SK-N-SH (cell line): ENCODE measurements at regions of chr5 and their contacts with region 1.

Region 1: DNA sequence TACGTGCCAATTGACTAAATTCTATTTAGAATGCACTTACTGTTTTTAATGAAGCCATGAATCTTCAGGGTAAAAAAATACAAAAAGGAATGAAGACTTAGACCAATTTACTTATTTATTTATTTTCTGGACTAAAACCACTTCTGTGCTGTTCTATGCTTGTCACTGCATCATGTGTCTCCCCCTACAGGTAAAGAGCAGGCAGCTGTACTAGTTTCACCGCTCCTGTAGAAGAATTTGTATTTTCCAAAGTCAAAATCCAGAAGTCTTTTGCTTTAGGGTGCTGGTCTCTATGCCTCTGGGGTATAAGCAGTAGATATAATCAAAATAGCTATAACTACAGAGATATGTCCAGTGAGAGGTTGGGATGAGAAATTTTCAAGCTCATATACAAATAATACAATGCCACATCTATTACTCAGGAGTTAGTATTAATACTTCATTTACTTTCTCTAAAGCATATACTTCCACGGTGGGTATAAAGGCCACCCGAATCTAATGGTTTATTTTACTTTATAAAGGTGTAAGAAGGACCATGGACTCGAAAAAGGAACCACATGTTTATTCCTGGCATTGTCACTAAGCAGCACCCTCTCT is 591.5 kb downstream of the RAB3C start:
- DNase-seq: peak; percentile 54
- H3K4me3 ChIP-seq: peak overlapping the region in 1 of 2 experiments; percentile 51; a peak in 1 of 4 replicates
- H3K27ac ChIP-seq: no peak overlapping the region
- H3K4me1 ChIP-seq: peaks cover 0 to 5% of the 10 kb centered on the region in 2 experiments; a peak in 2 of 4 replicates
- H3K27me3 ChIP-seq: no peaks in the 10 kb centered on the region
- CTCF ChIP-seq: peak; percentile 97
- EP300 ChIP-seq: no peak
- RAD21 ChIP-seq: peak; percentile 93

Region 2: DNA sequence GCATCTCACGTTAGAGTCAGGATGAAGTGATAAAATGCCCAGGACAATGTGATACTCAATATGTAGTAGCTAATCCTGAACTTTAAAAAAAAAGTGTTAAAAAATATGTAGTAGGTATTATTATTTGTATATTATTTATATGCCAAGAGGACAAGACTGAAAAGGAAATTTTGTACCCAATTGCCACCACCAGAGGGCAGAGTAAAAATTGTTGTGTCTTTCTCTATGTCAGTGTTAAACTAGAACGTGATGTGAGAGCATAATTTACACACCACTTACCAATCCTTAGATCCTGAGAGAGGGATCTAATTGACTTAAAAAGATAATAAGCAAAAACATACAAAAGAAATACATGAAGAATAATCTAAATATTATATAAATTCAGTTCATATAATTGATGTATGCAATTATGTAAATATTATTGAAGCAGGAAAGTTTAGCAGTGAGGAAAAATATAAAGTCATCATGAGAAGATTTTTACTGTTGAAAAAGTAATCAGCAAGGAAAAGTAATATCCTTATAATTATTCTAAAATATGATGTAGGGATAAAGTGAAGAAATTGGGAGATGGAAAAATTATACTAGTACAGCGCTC is 302.6 kb before region 1 on chr5:
- CTCF ChIA-PET with region 1: interaction called, 12 read pairs
- POLR2A ChIA-PET with region 1: no interaction called
- DNase-seq: peak; percentile 26
- H3K4me3 ChIP-seq: no peak overlapping the region; a peak in 1 of 4 replicates
- H3K27ac ChIP-seq: no peak overlapping the region
- H3K4me1 ChIP-seq: peaks cover 0 to 4% of the 10 kb centered on the region in 2 experiments; a peak in 1 of 4 replicates
- H3K27me3 ChIP-seq: no peaks in the 10 kb centered on the region
- CTCF ChIP-seq: peak; percentile 73
- EP300 ChIP-seq: no peak
- RAD21 ChIP-seq: peak; percentile 47

Region 3: GRCh38 chr5:59007460-59008063 is 166.8 kb before region 1 on chr5:
- CTCF ChIA-PET with region 1: interaction called, 16 read pairs
- POLR2A ChIA-PET with region 1: no interaction called
- DNase-seq: peak; percentile 15
- H3K4me3 ChIP-seq: peak overlapping the region in 1 of 2 experiments; percentile 17; a peak in 1 of 4 replicates
- H3K27ac ChIP-seq: no peak overlapping the region
- H3K4me1 ChIP-seq: peaks cover 0 to 10% of the 10 kb centered on the region in 2 experiments; a peak in 1 of 4 replicates
- H3K27me3 ChIP-seq: no peaks in the 10 kb centered on the region
- CTCF ChIP-seq: peak; percentile 68
- EP300 ChIP-seq: no peak
- RAD21 ChIP-seq: peak; percentile 79

Region 4: DNA sequence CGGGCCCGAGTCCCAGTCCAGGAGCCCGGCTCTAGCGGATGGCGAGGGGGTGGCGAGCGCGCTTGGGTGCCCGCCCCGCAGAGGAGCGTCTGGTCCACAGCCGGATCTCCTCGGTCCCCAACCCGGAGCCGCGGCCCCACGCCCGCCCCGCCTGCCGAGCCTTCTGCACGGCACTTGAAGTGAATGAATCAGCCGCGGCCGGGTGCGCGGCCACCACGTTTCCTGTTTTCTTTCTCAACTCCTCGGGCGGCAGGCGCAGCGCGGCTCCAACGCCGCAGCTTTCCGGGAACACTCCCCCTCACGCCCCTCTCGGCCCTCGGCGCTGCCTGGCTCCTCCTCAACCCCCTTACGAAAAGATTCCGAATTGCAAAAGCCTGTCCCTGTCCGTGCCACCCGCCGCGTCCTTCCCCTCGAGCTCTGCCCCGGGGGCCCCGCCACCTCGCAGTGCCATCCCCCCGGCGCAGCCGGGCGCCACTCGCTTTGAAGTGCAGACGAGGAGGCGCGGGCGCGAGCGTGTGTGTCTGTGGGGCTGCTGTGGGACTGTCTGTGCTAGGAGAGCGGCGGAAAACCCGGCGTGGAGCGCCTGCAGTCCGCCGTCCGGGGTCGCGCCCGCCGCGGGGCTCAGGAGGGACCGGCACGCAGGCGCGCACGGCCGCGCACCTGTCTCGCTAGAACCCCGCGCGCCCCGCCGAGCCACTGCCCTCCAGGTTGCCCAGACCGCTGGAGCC is 134.9 kb before region 1 on chr5:
- CTCF ChIA-PET with region 1: interaction called, 96 read pairs
- POLR2A ChIA-PET with region 1: no interaction called
- DNase-seq: peak; percentile 87
- H3K4me3 ChIP-seq: peak overlapping the region; percentile 74 to 76
- H3K27ac ChIP-seq: peak overlapping the region; percentile 41 to 50; a peak in 2 of 4 replicates
- H3K4me1 ChIP-seq: peaks cover 26 to 45% of the 10 kb centered on the region in 2 experiments
- H3K27me3 ChIP-seq: no peaks in the 10 kb centered on the region
- CTCF ChIP-seq: no peak
- EP300 ChIP-seq: 0 out of 4 replicates have a peak, but pooled peaks of 1 of the 2 experiments have one; percentile 38
- RAD21 ChIP-seq: no peak

Region 5: DNA sequence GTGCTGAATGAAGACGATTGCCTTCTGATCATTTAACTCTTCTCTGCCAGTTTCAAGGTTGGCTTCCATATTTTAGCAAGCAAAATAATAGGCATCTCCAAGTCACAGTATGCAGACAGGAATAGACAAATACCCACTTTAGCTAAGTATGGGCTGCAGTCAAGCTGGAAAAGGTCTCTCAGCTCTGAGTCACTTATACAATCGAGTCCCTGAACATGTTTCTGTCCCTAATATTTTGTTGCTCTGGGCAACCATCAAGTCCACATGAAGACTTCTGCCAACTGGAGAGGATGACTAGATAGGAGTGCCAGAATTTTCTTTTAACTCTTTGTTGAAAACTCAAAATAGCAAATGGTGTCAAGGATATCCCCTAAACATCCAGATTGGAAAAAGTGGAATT is 16.2 kb before region 1 on chr5:
- CTCF ChIA-PET with region 1: interaction called, 20 read pairs
- POLR2A ChIA-PET with region 1: no interaction called
- DNase-seq: no peak
- H3K4me3 ChIP-seq: no peak overlapping the region
- H3K27ac ChIP-seq: no peak overlapping the region
- H3K4me1 ChIP-seq: no peaks in the 10 kb centered on the region; a peak in 1 of 4 replicates
- H3K27me3 ChIP-seq: no peaks in the 10 kb centered on the region
- CTCF ChIP-seq: no peak
- EP300 ChIP-seq: no peak
- RAD21 ChIP-seq: no peak

Region 6: DNA sequence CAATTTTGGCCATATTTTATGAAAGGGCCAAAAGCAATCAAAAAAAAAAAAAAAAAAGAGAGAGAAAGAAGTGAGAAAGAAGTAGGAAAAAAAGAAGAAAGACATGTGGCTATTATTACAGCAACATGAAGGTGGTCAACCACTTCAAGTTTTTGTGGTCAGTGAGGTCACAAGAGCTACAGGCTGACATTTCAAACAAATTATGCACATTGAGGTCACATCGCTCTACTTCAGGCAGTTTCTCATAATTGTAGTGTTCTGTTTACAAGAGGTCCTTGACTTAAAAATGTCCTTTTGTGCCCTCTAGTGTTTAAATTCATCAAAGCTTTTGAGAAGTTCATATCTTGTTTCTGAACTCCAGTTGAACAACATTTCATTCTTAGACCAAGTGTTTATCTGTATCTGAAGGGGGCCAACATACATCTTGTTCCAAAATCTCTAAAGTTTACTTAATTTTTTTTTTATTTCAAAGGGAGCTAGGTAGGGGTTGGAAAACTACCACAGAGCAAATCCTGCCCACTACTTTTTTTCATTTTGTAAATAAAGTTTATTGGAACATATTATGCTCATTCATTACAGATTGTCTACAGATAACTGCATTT is 206.1 kb after region 1 on chr5:
- CTCF ChIA-PET with region 1: interaction called, 14 read pairs
- POLR2A ChIA-PET with region 1: no interaction called
- DNase-seq: peak; percentile 28
- H3K4me3 ChIP-seq: no peak overlapping the region
- H3K27ac ChIP-seq: no peak overlapping the region
- H3K4me1 ChIP-seq: no peaks in the 10 kb centered on the region; a peak in 1 of 4 replicates
- H3K27me3 ChIP-seq: no peaks in the 10 kb centered on the region
- CTCF ChIP-seq: peak; percentile 74
- EP300 ChIP-seq: no peak
- RAD21 ChIP-seq: peak; percentile 79

Region 7: DNA sequence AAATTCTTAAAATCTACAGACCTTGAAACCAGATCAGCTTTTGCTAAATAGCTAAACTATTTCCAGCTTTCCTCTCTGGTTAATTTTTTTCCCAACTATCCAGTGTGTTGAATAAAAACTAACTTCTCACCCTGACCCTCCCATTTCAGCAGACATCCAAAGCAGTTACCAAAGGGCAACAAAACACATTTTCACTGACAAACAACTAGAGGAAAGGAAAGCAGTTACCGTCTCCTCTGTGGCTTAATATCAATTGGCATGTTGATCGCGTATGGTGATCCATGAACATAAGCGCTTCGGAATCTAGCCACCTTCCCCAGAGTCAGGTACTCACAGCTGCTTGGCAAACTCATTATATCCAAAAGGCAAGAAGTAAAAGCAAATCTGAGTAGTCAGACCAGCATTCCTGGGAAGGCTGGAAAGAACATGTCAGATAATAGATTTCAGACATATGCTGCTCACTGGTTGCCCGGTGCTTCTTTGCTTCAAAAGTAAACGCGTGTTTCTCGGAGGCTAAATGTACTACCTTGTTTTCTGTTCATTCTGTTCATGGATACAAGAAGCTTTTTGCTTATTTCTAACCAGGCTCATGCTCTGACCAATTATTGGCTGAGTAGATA is 255.8 kb after region 1 on chr5:
- CTCF ChIA-PET with region 1: no interaction called
- POLR2A ChIA-PET with region 1: no interaction called
- DNase-seq: no peak
- H3K4me3 ChIP-seq: no peak overlapping the region
- H3K27ac ChIP-seq: no peak overlapping the region; a peak in 1 of 4 replicates
- H3K4me1 ChIP-seq: peaks cover 0 to 8% of the 10 kb centered on the region in 2 experiments; a peak in 1 of 4 replicates
- H3K27me3 ChIP-seq: no peaks in the 10 kb centered on the region
- CTCF ChIP-seq: no peak
- EP300 ChIP-seq: no peak
- RAD21 ChIP-seq: no peak